Calu3 (cell line): ENCODE measurements at regions of chr17 and their contacts with region 1.

Region 1: DNA sequence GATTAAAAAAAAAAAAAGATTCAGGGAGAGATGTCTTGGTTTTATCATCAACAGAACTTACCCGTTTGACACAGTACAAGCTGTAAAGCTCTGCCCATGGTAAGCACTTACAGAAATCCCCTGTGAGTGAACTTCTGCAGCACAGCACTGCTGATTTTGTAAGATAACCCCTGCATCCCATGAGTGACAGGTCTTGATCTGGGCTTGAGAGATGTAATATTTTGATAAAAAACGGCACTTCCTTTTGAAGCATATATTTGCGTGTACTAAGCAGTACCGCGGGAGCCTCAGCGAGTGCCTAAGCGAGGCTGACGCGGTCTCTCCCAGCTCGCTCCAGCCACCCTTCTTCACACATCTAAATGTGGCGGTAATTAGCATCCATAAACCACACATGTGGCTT is 50.5 kb downstream of the IKZF3 start:
- DNase-seq: peak; percentile 64
- H3K4me3 Mint-ChIP-seq: no peak overlapping the region
- H3K27ac Mint-ChIP-seq: no peak overlapping the region
- H3K4me1 Mint-ChIP-seq: peaks cover 19% of the 10 kb centered on the region
- H3K27me3 Mint-ChIP-seq: no peaks in the 10 kb centered on the region
- CTCF ChIP-seq: no peak

Region 2: DNA sequence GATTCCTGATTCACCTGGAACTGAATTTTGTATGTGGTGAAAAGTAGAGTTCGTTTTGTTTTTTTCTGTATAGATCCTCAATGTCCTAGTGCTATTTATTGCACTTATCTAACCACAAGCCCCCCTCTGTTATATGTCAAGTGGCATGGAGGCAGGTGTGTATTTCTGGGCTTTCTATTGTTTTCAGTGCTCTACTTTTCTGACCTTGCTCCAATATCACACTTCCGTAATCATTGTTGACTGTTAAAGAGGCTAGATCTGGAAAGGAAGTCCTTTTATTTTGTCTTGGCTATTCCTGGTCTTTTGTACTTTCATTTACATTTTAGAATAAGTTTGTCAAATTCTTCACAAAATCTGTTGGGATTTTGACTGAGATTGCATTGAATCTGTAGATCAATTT is 819.6 kb before region 1 on chr17:
- CTCF ChIA-PET with region 1: no interaction called
- intact Hi-C with region 1: loop called (anchors 10 kb)
- DNase-seq: no peak
- H3K4me3 Mint-ChIP-seq: no peak overlapping the region
- H3K27ac Mint-ChIP-seq: no peak overlapping the region
- H3K4me1 Mint-ChIP-seq: no peaks in the 10 kb centered on the region
- H3K27me3 Mint-ChIP-seq: peaks cover 11% of the 10 kb centered on the region
- CTCF ChIP-seq: no peak

Region 3: GRCh38 chr17:39699818-39700147 is 113.8 kb before region 1 on chr17 and contains the start of gene ERBB2:
- CTCF ChIA-PET with region 1: interaction called, 99 read pairs
- intact Hi-C with region 1: no loop called
- DNase-seq: peak; percentile 100
- H3K4me3 Mint-ChIP-seq: peak within 1 kb of the TSS; percentile 71
- H3K27ac Mint-ChIP-seq: peak within 1 kb of the TSS; percentile 67
- H3K4me1 Mint-ChIP-seq: peaks cover 68% of the 10 kb centered on the region
- H3K27me3 Mint-ChIP-seq: no peaks in the 10 kb centered on the region
- CTCF ChIP-seq: no peak
- total RNA-seq, gene ERBB2: 4,829 and 4,830 TPM in 2 replicates

Region 4: GRCh38 chr17:39744836-39745672 is 68.6 kb before region 1 on chr17:
- CTCF ChIA-PET with region 1: interaction called, 1,211 read pairs
- intact Hi-C with region 1: loop called (anchors 1 kb)
- DNase-seq: no peak
- H3K4me3 Mint-ChIP-seq: no peak overlapping the region
- H3K27ac Mint-ChIP-seq: no peak overlapping the region
- H3K4me1 Mint-ChIP-seq: peaks cover 32% of the 10 kb centered on the region
- H3K27me3 Mint-ChIP-seq: no peaks in the 10 kb centered on the region
- CTCF ChIP-seq: no peak

Region 5: GRCh38 chr17:39800540-39800939 is 13.1 kb before region 1 on chr17:
- CTCF ChIA-PET with region 1: interaction called, 1,210 read pairs
- intact Hi-C with region 1: no loop called
- DNase-seq: peak; percentile 85
- H3K4me3 Mint-ChIP-seq: no peak overlapping the region
- H3K27ac Mint-ChIP-seq: no peak overlapping the region
- H3K4me1 Mint-ChIP-seq: peaks cover 17% of the 10 kb centered on the region
- H3K27me3 Mint-ChIP-seq: no peaks in the 10 kb centered on the region
- CTCF ChIP-seq: no peak

Region 6: DNA sequence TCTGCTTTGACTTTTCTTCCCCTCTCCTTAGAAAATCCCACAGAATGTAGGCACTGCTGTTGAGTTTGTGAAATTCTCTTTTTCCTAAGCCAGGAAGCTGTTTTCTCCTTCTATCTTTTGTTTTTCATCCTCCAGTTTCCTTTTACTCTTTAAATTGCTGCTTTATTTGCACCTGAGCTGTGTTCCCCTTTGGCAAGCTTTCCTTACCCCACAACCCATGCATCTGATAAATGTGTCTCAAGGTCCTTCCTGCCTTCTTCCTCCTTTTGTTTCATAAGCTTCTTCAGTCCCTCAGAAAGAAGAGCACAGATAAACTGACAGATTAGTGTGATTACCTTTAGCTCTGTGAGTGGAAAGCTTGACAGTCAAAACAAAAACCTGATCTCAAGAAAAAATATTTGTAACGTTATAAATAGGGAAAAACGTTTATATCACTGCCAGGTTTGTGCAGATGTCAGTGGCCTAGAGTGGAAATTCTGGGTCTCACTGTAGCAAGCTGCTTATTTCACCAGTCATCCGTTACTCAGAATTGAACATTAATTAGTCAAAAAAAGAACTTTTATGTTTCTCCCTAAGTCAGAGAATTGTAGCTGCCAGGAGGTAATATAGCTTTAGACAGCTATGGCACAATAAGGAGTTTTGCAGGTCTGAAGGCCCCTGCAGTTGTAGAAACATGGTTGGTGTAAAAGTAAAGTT is 81.2 kb after region 1 on chr17:
- CTCF ChIA-PET with region 1: interaction called, 1,004 read pairs
- intact Hi-C with region 1: no loop called
- DNase-seq: peak; percentile 63
- H3K4me3 Mint-ChIP-seq: no peak overlapping the region
- H3K27ac Mint-ChIP-seq: no peak overlapping the region
- H3K4me1 Mint-ChIP-seq: peaks cover 23% of the 10 kb centered on the region
- H3K27me3 Mint-ChIP-seq: peaks cover 15% of the 10 kb centered on the region
- CTCF ChIP-seq: no peak

Region 7: GRCh38 chr17:39952680-39953470 is 139.2 kb after region 1 on chr17:
- CTCF ChIA-PET with region 1: interaction called, 1,809 read pairs
- intact Hi-C with region 1: no loop called
- DNase-seq: peak; percentile 100
- H3K4me3 Mint-ChIP-seq: peak overlapping the region; percentile 58
- H3K27ac Mint-ChIP-seq: peak overlapping the region; percentile 18
- H3K4me1 Mint-ChIP-seq: peaks cover 42% of the 10 kb centered on the region
- H3K27me3 Mint-ChIP-seq: peaks cover 15% of the 10 kb centered on the region
- CTCF ChIP-seq: no peak